K562 (cell line): ENCODE measurements at regions of chr9 and their contacts with region 1.

Region 1: GRCh38 chr9:126398403-126399058 is 71.9 kb downstream of the MVB12B start:
- DNase-seq: peak; percentile 72 to 83 (median 80)
- ATAC-seq: peak; percentile 98
- H3K4me3 ChIP-seq: no peak overlapping the region
- H3K27ac ChIP-seq: no peak overlapping the region
- H3K4me1 ChIP-seq: peaks cover 0 to 6% of the 10 kb centered on the region in 2 experiments; a peak in 1 of 5 replicates
- H3K27me3 ChIP-seq: peaks cover 23 to 77% of the 10 kb centered on the region in 2 experiments; a peak in 4 of 5 replicates
- CTCF ChIP-seq: peak; percentile 89 to 98 (median 92)
- EP300 ChIP-seq: no peak
- POLR2A ChIP-seq: no peak
- RAD21 ChIP-seq: peak; percentile 77 to 90

Region 2: DNA sequence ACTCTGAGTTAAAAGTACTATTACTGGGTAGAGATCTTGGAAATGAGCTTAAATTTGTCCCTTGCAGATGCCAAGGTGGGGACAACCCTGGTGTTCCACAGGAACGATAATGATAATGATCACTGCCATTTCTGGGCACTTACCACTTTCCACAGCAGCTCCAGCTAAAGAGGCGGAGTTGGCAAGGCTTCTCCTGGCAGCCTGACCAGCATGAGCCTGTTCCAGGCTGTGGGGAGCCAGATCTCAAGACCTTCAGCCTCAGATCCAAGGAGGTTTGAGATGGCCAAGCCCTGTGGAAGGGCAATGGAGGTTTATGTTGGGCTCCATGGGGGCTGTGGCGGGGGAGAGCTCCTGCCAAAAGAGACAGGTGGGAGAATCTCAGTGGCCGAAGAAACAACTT is 316.8 kb before region 1 on chr9:
- CTCF ChIA-PET with region 1: no interaction called
- POLR2A ChIA-PET with region 1: no interaction called
- in situ Hi-C with region 1: no loop called
- intact Hi-C with region 1: no loop called
- DNase-seq: no peak
- ATAC-seq: no peak
- H3K4me3 ChIP-seq: no peak overlapping the region
- H3K27ac ChIP-seq: no peak overlapping the region
- H3K4me1 ChIP-seq: no peaks in the 10 kb centered on the region
- H3K27me3 ChIP-seq: no peaks in the 10 kb centered on the region
- CTCF ChIP-seq: no peak
- EP300 ChIP-seq: no peak
- POLR2A ChIP-seq: no peak
- RAD21 ChIP-seq: no peak

Region 3: DNA sequence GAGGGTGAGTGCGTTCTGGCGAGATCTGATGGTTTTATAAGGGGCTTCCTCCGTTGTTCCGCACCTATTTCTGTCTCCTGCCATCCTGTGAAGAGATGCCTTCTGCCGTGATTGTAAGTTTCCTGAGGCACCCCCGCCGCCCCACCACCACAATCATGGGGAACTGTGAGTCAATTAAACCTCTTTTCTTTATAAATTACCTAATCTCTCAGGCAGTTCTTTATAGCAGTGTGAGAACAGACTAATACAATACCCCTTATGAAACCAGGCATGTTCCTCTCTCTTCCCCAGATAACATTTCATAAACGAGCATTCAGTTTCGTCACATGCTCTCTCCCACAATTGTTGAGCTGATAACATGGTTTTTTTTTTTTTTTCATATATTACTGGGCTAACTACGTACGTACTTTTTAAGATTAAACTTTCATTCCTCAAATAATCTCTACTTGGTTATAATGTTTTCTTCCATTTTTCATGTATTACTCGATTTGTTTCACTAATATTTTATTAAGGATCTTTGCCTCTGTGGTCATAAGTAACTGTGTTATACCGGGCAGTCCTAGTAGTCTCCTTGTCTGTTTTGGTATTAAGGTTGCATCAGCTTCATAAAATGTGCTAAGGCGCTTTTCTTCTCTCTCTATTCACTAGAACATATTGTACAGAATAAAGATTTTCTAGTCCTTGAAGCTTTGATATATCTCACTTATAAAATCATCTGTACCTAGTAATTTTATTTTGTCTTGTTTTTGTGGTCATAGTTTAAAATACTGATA is 136.8 kb before region 1 on chr9:
- CTCF ChIA-PET with region 1: no interaction called
- POLR2A ChIA-PET with region 1: no interaction called
- in situ Hi-C with region 1: no loop called
- intact Hi-C with region 1: no loop called
- DNase-seq: no peak
- ATAC-seq: peak; percentile 45; the same call in 2 of the 3 replicates
- H3K4me3 ChIP-seq: no peak overlapping the region
- H3K27ac ChIP-seq: no peak overlapping the region
- H3K4me1 ChIP-seq: no peaks in the 10 kb centered on the region
- H3K27me3 ChIP-seq: peaks cover 0 to 4% of the 10 kb centered on the region in 2 experiments; a peak in 2 of 5 replicates
- CTCF ChIP-seq: no peak
- EP300 ChIP-seq: peak; percentile 22; the same call in 1 of the 2 replicates
- POLR2A ChIP-seq: no peak
- RAD21 ChIP-seq: no peak

Region 4: DNA sequence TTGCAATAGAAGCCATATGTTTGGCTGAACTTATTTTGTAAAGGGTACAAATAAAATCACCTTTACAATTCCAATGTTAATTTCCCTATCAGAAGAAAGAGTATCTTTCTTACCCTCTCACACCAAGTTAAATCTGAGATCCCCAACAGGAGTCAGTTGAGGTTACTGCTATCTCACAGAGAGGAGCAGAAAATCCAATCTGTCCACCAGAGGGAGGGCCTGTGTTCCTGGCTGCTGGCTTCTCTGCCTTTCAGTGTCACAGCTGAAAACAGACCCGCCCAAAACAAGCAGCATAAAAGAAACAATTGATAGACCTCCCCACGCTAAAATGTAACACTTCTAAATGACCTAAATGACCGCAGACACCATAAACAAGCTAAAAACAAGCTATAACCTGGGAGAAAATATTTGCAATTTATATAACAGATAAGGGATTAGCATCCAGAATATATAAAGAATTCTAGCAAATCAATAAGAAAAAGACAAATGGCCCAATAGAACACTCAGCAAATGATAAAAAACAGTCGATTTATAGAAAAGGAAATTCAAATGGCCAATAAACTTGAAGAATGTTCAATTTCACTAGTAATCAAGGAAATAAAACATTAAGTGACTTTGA is 96.4 kb before region 1 on chr9:
- CTCF ChIA-PET with region 1: no interaction called
- POLR2A ChIA-PET with region 1: no interaction called
- in situ Hi-C with region 1: no loop called
- intact Hi-C with region 1: loop called (anchors 5 kb)
- DNase-seq: peak; percentile 33 to 61 (median 51)
- ATAC-seq: peak; percentile 81
- H3K4me3 ChIP-seq: no peak overlapping the region
- H3K27ac ChIP-seq: no peak overlapping the region
- H3K4me1 ChIP-seq: no peaks in the 10 kb centered on the region
- H3K27me3 ChIP-seq: peaks cover 2 to 40% of the 10 kb centered on the region in 2 experiments; a peak in 4 of 5 replicates
- CTCF ChIP-seq: peak; percentile 58 to 63 (median 59); a peak in 5 of 6 replicates
- EP300 ChIP-seq: no peak
- POLR2A ChIP-seq: no peak
- RAD21 ChIP-seq: peak; percentile 46 to 51; a peak in 3 of 4 replicates

Region 5: DNA sequence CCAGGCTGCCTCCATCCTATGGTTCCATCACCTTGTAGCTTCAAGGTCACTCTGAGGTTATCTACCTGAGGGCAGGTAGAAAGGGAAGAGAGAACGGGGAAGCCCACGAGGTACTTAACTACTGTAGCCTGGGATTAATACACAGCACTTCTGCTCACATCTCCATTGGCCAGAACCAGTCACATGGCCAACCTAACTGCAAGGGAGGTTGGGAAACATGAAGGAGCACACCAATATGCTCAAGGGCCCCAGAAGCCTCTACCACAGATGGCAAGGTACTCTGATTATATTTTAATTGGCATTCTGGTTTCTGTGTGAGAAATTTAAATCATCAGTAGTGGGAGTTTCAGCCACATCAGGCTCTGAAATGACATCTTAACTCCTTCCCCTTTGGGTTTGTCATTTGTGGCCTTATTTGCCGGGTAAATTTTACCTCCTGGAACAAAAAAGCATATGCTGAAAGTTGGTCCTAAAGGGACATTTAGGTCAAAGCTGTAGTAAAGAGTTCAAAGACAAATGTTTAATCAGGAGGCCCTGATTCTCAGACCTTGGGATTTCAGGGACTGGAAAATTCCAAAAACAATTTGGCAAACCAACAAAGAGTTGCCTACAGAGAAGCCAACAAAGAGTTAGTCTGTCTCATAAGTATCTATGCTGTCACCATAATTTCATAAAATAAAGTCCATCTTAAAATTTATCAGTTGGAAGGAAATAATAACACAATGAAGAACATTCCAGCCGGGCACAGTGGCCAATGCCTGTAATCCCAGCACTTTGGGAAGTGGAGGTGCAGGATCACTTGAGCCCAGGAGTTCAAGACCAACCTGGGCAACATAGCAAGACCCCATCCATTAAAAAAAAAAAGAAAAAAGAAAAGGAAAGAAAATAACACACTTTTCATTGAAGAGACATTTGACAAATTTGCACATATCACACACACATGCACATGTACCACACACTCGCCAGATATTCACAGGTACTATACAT is 85.7 kb before region 1 on chr9:
- CTCF ChIA-PET with region 1: no interaction called
- POLR2A ChIA-PET with region 1: no interaction called
- in situ Hi-C with region 1: no loop called
- intact Hi-C with region 1: no loop called
- DNase-seq: no peak
- ATAC-seq: no peak
- H3K4me3 ChIP-seq: no peak overlapping the region
- H3K27ac ChIP-seq: no peak overlapping the region
- H3K4me1 ChIP-seq: no peaks in the 10 kb centered on the region
- H3K27me3 ChIP-seq: peaks cover 0 to 7% of the 10 kb centered on the region in 2 experiments; a peak in 1 of 5 replicates
- CTCF ChIP-seq: no peak
- EP300 ChIP-seq: no peak
- POLR2A ChIP-seq: no peak
- RAD21 ChIP-seq: no peak

Region 6: GRCh38 chr9:126532019-126532462 is 133.5 kb after region 1 on chr9:
- CTCF ChIA-PET with region 1: no interaction called
- POLR2A ChIA-PET with region 1: no interaction called
- in situ Hi-C with region 1: no loop called
- intact Hi-C with region 1: no loop called
- DNase-seq: no peak
- ATAC-seq: no peak
- H3K4me3 ChIP-seq: no peak overlapping the region
- H3K27ac ChIP-seq: no peak overlapping the region
- H3K4me1 ChIP-seq: no peaks in the 10 kb centered on the region
- H3K27me3 ChIP-seq: peaks cover 44 to 79% of the 10 kb centered on the region in 2 experiments
- CTCF ChIP-seq: no peak
- EP300 ChIP-seq: no peak
- POLR2A ChIP-seq: no peak
- RAD21 ChIP-seq: no peak